ENCODE measurements at regions of chr11 and their contacts with region 1.

Region 1: GRCh38 chr11:63553741-63554151 is 9.4 kb downstream of the PLAAT2 start:
- DNase-seq: peak; percentile 59
- ATAC-seq: peak; percentile 77
- H3K4me3 Mint-ChIP-seq: peak overlapping the region; percentile 84
- H3K27ac Mint-ChIP-seq: peak overlapping the region; percentile 100
- H3K4me1 Mint-ChIP-seq: peaks cover 48% of the 10 kb centered on the region
- H3K27me3 Mint-ChIP-seq: no peaks in the 10 kb centered on the region

Region 2: DNA sequence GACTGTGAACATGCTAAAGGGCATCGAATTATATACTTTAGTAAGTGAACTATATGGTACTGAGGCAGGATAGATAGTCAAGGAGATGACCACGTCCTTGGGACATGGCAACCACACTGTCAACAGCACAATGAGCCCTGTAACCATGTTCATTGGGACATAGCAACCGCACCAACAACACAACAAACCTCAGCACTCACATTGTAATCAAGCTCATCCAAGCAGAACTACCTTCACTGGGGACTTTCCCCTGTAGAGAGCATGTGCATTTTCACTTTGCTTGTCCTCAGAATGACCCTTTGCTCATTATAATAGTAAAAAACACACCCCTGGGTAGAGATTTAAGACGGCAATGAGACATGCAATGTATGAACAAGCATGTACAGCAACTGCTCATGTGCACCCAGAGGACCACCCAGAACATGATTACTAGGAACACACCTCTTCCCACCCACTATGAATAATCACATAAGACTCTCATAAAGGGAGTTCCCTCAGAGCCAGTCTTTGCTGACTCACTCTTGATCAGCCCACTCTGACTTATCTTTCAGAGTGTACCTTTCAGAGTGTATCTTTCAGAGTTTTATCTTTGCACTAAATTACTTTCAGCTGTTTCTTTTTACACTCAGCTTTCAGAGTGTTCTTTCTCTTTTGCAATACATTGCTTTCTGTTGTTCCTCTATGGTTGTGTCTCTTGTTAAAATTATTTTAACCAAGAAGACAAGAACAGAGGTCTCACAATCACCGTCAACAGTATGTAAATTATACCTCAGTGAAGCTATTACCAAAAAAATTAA is 13.5 kb after region 1 on chr11:
- POLR2A ChIA-PET with region 1: interaction called, 86 read pairs
- DNase-seq: no peak
- ATAC-seq: peak; percentile 69
- H3K4me3 Mint-ChIP-seq: peak overlapping the region; percentile 46
- H3K27ac Mint-ChIP-seq: peak overlapping the region; percentile 8
- H3K4me1 Mint-ChIP-seq: peaks cover 42% of the 10 kb centered on the region
- H3K27me3 Mint-ChIP-seq: peaks cover 4% of the 10 kb centered on the region

Region 3: DNA sequence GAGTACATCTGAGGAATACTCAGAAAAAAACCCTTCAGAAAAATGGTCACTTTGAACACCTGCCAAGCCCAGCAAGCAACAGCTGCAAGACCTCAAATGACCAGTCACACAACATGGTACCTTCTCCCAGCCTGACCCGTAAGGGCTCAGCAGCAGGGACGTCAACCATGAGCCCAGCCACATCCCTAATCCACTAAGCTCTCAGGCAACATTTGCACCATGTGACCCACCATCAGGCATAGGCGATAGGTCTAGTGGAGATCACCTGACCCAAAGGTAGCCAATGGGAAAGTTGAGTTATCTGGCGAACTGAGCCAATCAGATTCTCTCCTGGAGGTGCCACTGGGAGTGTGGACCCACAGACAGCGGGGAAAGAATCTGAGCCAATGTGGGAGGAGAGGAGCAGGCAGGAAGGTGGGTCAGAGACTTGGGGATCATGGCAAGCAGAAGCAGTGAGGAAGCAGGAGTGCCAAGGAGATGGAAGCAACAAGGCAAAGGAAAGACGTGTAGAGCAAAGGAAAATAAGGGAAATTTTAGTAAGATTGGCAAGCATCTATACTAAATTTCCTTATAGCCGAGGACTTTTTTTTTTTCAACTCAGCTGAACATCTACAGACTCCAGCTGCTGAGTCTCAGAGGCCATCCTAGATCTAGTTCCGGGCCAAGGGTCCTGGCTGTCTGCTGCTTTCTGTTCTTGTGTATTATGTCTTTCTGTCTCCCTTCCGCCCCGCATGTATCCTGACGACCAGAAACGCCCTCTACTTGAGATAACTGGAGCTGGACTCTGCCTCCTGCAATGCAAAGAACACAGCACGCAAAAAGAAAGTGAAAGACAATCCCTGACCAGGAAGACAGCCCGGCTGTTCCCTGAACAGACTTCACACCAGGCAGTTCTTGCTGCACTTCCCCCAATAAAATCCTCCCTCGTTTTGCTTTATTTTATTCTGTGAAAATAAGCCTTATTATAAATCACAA is 20.4 kb after region 1 on chr11:
- POLR2A ChIA-PET with region 1: interaction called, 34 read pairs
- DNase-seq: peak; percentile 51
- ATAC-seq: peak; percentile 95
- H3K4me3 Mint-ChIP-seq: peak overlapping the region; percentile 80
- H3K27ac Mint-ChIP-seq: peak overlapping the region; percentile 96
- H3K4me1 Mint-ChIP-seq: peaks cover 21% of the 10 kb centered on the region
- H3K27me3 Mint-ChIP-seq: peaks cover 4% of the 10 kb centered on the region

Measured in activated naive CD8-positive, alpha-beta T cell treated with anti-CD3 and anti-CD28 coated beads, Interleukin-2, amount 10 ng/mL, durations not matched to agents 7 days and 5 days (primary cell).